ENCODE measurements at regions of chr16 and their contacts with region 1.

Region 1: GRCh38 chr16:69424053-69424934 is at the start of gene CYB5B:
- DNase-seq: peak; percentile 94
- total RNA-seq, gene CYB5B: 53.2 TPM

Region 2: GRCh38 chr16:69330286-69331109 is 93.8 kb before region 1 on chr16 and contains the start of gene PDF:
- intact Hi-C with region 1: no loop called
- DNase-seq: peak; percentile 98
- total RNA-seq, gene PDF: 5.7 TPM

Region 3: GRCh38 chr16:69443927-69444631 is 19.8 kb after region 1 on chr16:
- intact Hi-C with region 1: loop called (anchors 2 kb)
- DNase-seq: peak; percentile 79